ENCODE measurements at regions of chr6 and their contacts with region 1.

Region 1: GRCh38 chr6:3209114-3210023 is 18.1 kb downstream of the TUBB2B start:
- DNase-seq: peak; percentile 99
- H3K4me3 ChIP-seq: no peak overlapping the region
- H3K27ac ChIP-seq: peak overlapping the region; percentile 88
- H3K4me1 ChIP-seq: peaks cover 33% of the 10 kb centered on the region
- H3K27me3 ChIP-seq: no peaks in the 10 kb centered on the region
- CTCF ChIP-seq: peak in 1 of 2 donors; percentile 55

Region 2: GRCh38 chr6:2999618-3000557 is 209.5 kb before region 1 on chr6 and contains the start of gene NQO2:
- CTCF ChIA-PET with region 1: no interaction called
- dilution Hi-C with region 1: no loop called
- in situ Hi-C with region 1: no loop called
- intact Hi-C with region 1: loop called (anchors 5 kb)
- DNase-seq: no peak
- H3K4me3 ChIP-seq: peak within 1 kb of the TSS; percentile 62 to 94 (median 80)
- H3K27ac ChIP-seq: peak within 1 kb of the TSS; percentile 47
- H3K4me1 ChIP-seq: peaks cover 22% of the 10 kb centered on the region
- H3K27me3 ChIP-seq: no peaks in the 10 kb centered on the region
- CTCF ChIP-seq: peak in 1 of 2 donors; percentile 6
- total RNA-seq, gene NQO2: 17.0 to 20.3 TPM

Region 3: GRCh38 chr6:3118353-3119039 is 90.9 kb before region 1 on chr6 and contains the start of gene BPHL:
- CTCF ChIA-PET with region 1: interaction called, 3 read pairs
- dilution Hi-C with region 1: no loop called
- in situ Hi-C with region 1: no loop called
- intact Hi-C with region 1: loop called (anchors 2 kb)
- DNase-seq: peak; percentile 94
- H3K4me3 ChIP-seq: peak within 1 kb of the TSS; percentile 77 to 92 (median 85)
- H3K27ac ChIP-seq: peak within 1 kb of the TSS; percentile 96
- H3K4me1 ChIP-seq: peaks cover 4% of the 10 kb centered on the region
- H3K27me3 ChIP-seq: no peaks in the 10 kb centered on the region
- CTCF ChIP-seq: no peak
- total RNA-seq, gene BPHL: 24.8 to 25.8 TPM

Region 4: GRCh38 chr6:3157131-3157927 is 52.0 kb before region 1 on chr6 and contains the start of gene TUBB2A:
- CTCF ChIA-PET with region 1: interaction called, 11 read pairs
- dilution Hi-C with region 1: no loop called
- in situ Hi-C with region 1: loop called in 1 of 2 experiments (anchors 5 kb)
- intact Hi-C with region 1: loop called (anchors 1 kb)
- DNase-seq: peak; percentile 80
- H3K4me3 ChIP-seq: peak within 1 kb of the TSS; percentile 74 to 92 (median 81)
- H3K27ac ChIP-seq: peak within 1 kb of the TSS; percentile 80
- H3K4me1 ChIP-seq: peaks cover 5% of the 10 kb centered on the region
- H3K27me3 ChIP-seq: no peaks in the 10 kb centered on the region
- CTCF ChIP-seq: peak; percentile 14 to 55
- total RNA-seq, gene TUBB2A: 70.2 to 214 TPM

Region 5: DNA sequence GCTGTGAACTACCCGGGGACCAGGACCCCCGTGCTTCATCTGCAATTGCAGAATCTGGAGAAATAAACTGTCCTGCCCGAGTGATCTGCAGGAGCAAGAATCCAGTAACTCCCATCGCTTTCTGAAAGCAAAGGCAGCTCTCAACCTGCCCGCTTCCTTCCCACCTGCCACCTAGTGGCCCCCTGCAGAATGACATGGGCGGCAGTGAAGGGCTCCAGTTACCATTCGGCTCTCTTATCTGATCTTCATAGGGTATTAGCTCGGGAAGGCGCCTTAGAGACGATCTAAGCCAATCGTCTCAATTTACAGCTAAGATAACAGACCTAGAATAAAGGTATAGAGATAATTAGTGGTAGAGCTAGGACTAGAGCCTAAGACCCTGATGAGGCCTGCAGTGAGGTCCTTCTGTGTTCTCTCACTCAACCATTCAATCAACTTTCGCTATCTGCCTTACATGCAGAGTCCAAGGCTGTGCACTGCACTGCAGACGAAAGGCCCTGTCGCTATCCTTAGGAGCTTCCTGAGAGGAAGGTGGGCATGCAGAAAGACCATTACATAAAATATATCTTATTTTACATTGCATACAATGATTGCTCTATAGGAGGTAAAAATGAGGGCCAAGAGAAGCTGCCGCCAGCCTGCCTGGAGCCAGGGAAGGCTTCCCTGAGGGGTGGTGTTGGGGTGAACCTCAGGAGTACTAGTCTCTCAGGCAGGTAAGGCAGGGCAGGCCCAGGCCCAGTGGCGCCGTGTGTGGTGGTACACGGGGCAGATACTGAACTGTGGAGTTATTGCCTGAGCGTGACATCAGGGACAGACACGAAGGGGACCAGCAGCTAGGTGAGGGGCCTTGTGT is 42.3 kb after region 1 on chr6:
- CTCF ChIA-PET with region 1: interaction called, 8 read pairs
- dilution Hi-C with region 1: no loop called
- in situ Hi-C with region 1: no loop called
- intact Hi-C with region 1: loop called (anchors 1 kb)
- DNase-seq: peak; percentile 72
- H3K4me3 ChIP-seq: no peak overlapping the region
- H3K27ac ChIP-seq: no peak overlapping the region
- H3K4me1 ChIP-seq: peaks cover 16% of the 10 kb centered on the region
- H3K27me3 ChIP-seq: no peaks in the 10 kb centered on the region
- CTCF ChIP-seq: peak; percentile 97 to 99

Region 6: GRCh38 chr6:3281631-3282475 is 72.5 kb after region 1 on chr6:
- CTCF ChIA-PET with region 1: no interaction called
- dilution Hi-C with region 1: no loop called
- in situ Hi-C with region 1: no loop called
- intact Hi-C with region 1: no loop called
- DNase-seq: peak; percentile 92
- H3K4me3 ChIP-seq: no peak overlapping the region
- H3K27ac ChIP-seq: no peak overlapping the region
- H3K4me1 ChIP-seq: peaks cover 15% of the 10 kb centered on the region
- H3K27me3 ChIP-seq: no peaks in the 10 kb centered on the region
- CTCF ChIP-seq: peak in 1 of 2 donors; percentile 7